ENCODE measurements at regions of chr9 and their contacts with region 1.

Region 1: DNA sequence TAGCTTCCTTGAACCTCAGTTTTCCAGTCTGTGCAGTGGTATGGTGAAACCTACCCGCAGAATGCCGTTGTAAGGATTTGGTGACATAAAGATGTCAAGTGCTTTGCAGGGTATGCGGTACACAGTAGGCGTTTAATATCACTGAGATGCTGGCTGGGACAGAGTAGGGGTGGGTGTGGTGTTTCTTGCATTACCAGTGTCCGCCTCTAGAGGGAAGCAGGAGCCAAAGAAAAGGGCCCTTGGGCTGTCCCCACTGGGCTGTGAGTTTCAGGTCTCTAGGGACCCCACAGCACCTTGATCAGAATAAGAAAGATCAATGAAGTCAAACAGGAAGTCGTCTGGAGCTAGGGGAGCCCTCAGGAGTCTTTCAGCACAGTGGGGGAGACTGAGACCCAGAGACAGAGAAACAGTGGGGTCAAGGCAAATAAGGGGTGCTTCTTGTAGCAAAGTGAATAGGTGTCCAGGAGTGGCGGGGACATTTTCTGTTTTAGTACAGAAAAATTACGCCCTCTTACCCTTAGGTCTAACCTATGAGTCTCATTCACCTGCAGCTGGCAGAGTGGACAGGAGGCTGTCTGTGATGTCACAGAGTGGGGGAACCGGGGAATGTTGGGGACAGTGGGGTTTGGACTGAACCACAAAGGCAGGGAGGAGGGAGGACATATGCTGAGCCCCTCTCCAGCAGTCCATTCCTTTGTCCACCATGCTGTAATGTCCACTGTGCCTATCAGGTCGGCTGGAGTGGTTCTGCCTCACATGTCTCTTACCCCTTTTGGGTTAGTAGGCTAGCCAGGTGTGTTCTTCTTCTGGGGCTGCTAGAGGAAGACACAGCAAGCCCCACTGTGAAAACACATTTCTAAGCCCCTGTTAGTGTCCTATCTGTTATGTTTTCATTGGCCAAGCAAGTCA is 4.7 kb upstream of the TEX53 start:
- DNase-seq: peak; percentile 91
- H3K4me3 Mint-ChIP-seq: no peak overlapping the region
- H3K27ac Mint-ChIP-seq: no peak overlapping the region
- H3K4me1 Mint-ChIP-seq: peaks cover 13% of the 10 kb centered on the region
- H3K27me3 Mint-ChIP-seq: peaks cover 14% of the 10 kb centered on the region

Region 2: GRCh38 chr9:114641967-114642366 is 20.4 kb before region 1 on chr9:
- intact Hi-C with region 1: no loop called
- DNase-seq: no peak
- H3K4me3 Mint-ChIP-seq: no peak overlapping the region
- H3K27ac Mint-ChIP-seq: no peak overlapping the region
- H3K4me1 Mint-ChIP-seq: peaks cover 2% of the 10 kb centered on the region
- H3K27me3 Mint-ChIP-seq: no peaks in the 10 kb centered on the region

Region 3: GRCh38 chr9:115000217-115000639 is 337.9 kb after region 1 on chr9:
- intact Hi-C with region 1: no loop called
- DNase-seq: no peak
- H3K4me3 Mint-ChIP-seq: peak overlapping the region; percentile 10
- H3K27ac Mint-ChIP-seq: peak overlapping the region; percentile 80
- H3K4me1 Mint-ChIP-seq: peaks cover 42% of the 10 kb centered on the region
- H3K27me3 Mint-ChIP-seq: no peaks in the 10 kb centered on the region

Region 4: DNA sequence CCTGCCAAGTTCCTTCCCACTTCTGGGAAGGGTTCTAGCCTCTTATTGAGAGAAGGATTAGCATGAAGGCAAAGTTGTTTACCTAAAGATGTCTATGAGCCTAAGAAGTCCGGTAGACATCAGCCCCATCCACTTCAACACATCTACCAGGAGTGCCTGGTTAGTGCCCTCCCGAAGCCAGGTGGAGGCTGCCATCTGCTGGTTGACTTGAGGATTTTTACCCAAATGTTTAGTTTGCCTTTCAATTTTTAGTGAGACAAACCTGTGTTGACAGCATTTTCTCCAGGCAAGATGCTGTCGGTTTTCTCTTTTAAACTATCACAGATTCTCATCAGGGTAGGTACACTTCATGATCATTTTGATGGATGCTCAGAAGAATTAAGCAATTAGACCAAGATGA is 351.7 kb after region 1 on chr9:
- intact Hi-C with region 1: loop called (anchors 1 kb)
- DNase-seq: peak; percentile 93
- H3K4me3 Mint-ChIP-seq: peak overlapping the region; percentile 18
- H3K27ac Mint-ChIP-seq: peak overlapping the region; percentile 77
- H3K4me1 Mint-ChIP-seq: peaks cover 55% of the 10 kb centered on the region
- H3K27me3 Mint-ChIP-seq: peaks cover 2% of the 10 kb centered on the region

Region 5: GRCh38 chr9:116494815-116495634 is 1832.7 kb after region 1 on chr9:
- intact Hi-C with region 1: loop called (anchors 10 kb)
- DNase-seq: peak; percentile 73
- H3K4me3 Mint-ChIP-seq: no peak overlapping the region
- H3K27ac Mint-ChIP-seq: no peak overlapping the region
- H3K4me1 Mint-ChIP-seq: no peaks in the 10 kb centered on the region
- H3K27me3 Mint-ChIP-seq: no peaks in the 10 kb centered on the region

Measured in activated CD4-positive, alpha-beta T cell treated with anti-CD3 and anti-CD28 coated beads, Interleukin-2, amount 10 ng/mL, durations not matched to agents 24 days and 14 days (primary cell).